Body of pancreas (tissue), 4 donors: ENCODE measurements at regions of chr3 and their contacts with region 1.

Region 1: DNA sequence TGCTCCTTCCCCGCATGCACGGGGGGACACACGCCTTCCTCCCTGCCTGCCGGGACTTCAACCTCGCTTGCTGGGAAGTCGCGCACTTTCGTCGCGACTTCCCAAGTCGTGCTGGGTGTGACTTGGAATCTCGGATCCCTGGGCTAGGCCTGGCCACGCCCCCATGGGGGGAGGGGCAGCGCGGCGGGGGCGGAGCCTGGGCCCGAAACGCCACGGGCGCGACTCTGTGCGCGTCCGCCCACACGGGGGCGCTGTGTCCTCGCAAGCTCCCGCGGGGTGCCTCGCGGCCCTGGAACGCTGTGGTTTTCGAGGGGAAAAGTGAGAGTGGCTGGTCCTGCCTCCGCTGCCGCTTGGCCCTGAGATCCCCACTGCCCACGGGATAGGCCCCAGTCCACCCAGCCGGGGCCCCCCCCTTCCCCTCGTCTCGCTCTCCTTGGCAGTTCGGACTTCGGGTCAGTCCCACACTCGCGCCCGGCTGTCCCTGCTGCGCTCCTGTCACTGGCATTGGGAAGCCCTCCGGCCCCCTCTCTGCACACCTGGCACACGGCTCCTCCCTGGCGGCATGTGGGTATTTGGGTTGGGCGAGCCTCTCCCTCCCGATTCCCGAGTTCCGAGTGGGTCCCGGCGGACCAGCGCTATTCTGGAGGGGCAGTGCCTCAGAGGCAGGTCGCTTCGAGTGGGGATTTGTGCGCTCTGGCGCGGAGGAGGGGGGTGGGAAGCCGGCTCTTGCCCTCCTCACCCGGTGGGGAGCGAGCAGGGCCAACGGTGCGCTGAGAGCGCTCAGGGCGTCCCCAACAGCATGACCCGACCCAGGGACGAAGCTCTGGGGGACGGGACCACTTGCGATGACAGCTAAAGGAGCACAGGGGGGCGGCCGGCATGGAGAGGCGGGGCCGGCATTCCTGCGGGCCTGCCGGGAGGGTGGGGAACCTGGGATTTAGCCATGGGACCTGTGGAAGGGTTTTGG is 23.6 kb downstream of the SEC61A1 start:
- DNase-seq: peak; percentile 85 to 91 (median 88)
- ATAC-seq: peak; percentile 87
- H3K4me3 ChIP-seq: no peak overlapping the region
- H3K27ac ChIP-seq: peak overlapping the region in 2 of 4 donors; percentile 28 to 53
- H3K4me1 ChIP-seq: peaks cover 42% of the 10 kb centered on the region
- H3K27me3 ChIP-seq: no peaks in the 10 kb centered on the region
- CTCF ChIP-seq: peak; percentile 90 to 98 (median 97)
- POLR2A ChIP-seq: peak in 1 of 3 donors; percentile 14

Region 2: GRCh38 chr3:128503164-128503651 is 427.4 kb after region 1 on chr3:
- intact Hi-C with region 1: loop called (anchors 10 kb)
- DNase-seq: peak in 1 of 4 donors; percentile 7
- ATAC-seq: no peak
- H3K4me3 ChIP-seq: no peak overlapping the region
- H3K27ac ChIP-seq: no peak overlapping the region
- H3K4me1 ChIP-seq: no peaks in the 10 kb centered on the region
- H3K27me3 ChIP-seq: no peaks in the 10 kb centered on the region
- CTCF ChIP-seq: peak in 4 of 7 experiments; percentile 15 to 33 (median 24)
- POLR2A ChIP-seq: no peak